ENCODE measurements at regions of chr10 and their contacts with region 1.

Region 1: GRCh38 chr10:110803830-110804338 is 67.8 kb upstream of the PDCD4 start:
- DNase-seq: peak; percentile 31 to 47 (median 45)
- H3K4me3 ChIP-seq: peak overlapping the region in 1 of 7 experiments; percentile 37
- H3K27ac ChIP-seq: no peak overlapping the region
- H3K4me1 ChIP-seq: peaks cover 3 to 32% (median 18%) of the 10 kb centered on the region in 4 experiments
- H3K27me3 ChIP-seq: no peaks in the 10 kb centered on the region

Region 2: GRCh38 chr10:110834629-110835301 is 30.9 kb after region 1 on chr10:
- CTCF ChIA-PET with region 1: interaction called, 16 read pairs
- POLR2A ChIA-PET with region 1: no interaction called
- DNase-seq: peak; percentile 36 to 87 (median 81)
- H3K4me3 ChIP-seq: no peak overlapping the region
- H3K27ac ChIP-seq: peak overlapping the region in 1 of 2 experiments; percentile 22
- H3K4me1 ChIP-seq: peaks cover 0 to 19% (median 12%) of the 10 kb centered on the region in 4 experiments
- H3K27me3 ChIP-seq: no peaks in the 10 kb centered on the region

Region 3: DNA sequence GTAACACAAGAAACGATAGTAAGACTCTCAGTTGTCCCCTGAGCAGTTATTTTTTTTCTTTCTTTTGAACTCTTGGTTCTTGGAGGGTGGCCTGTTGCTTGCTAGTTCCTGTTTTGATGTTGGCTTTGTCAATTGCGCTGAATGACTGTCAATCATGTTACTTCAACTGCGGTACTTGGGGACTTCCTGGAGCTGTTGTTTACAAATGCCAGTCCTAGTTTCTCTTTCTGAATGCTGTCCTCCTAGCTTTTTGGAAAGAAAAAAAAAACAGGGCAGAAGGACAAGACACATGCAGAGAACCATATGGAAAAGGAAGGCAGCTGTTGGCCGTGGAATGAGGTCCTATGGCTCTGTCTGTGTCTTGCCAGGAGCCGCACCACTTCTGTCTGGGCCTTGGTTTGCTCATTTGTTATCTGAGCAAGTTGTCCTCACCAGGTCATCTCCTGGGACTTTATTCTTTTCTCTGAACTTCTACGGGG is 60.8 kb after region 1 on chr10:
- CTCF ChIA-PET with region 1: interaction called, 19 read pairs
- POLR2A ChIA-PET with region 1: no interaction called
- DNase-seq: peak; percentile 76 to 95 (median 91)
- H3K4me3 ChIP-seq: peak overlapping the region in 5 of 7 experiments; percentile 1 to 65 (median 45)
- H3K27ac ChIP-seq: peak overlapping the region; percentile 69 to 79
- H3K4me1 ChIP-seq: peaks cover 68 to 92% (median 81%) of the 10 kb centered on the region in 4 experiments
- H3K27me3 ChIP-seq: no peaks in the 10 kb centered on the region

Region 4: DNA sequence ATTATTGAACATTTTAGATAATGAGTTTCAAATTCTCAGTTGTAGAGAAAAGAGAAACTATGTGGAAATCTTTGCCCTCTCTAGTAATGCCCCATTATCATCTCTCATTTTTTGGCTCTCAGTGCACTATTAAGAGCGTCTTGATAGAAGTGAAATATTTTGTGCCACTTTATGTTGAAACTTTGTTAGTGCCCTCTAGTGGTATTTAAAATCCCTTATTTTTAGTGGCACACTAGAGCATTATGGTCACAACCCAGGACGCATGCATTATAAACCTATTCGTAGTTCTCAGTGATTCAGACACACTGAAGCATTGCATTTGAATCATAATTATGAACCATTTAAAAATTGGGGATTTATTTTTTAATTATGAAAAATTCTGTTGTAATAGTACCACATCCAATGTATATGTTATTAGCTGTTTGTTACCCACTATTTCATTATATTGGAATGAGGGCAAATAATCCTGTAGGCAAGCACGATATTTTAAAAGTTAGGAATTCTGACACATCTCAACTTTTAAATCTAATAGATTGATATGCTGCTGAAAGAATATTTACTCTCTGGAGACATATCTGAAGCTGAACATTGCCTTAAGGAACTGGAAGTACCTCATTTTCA is 89.8 kb after region 1 on chr10:
- CTCF ChIA-PET with region 1: interaction called, 32 read pairs
- POLR2A ChIA-PET with region 1: no interaction called
- DNase-seq: peak; percentile 58 to 83 (median 78)
- H3K4me3 ChIP-seq: no peak overlapping the region
- H3K27ac ChIP-seq: no peak overlapping the region
- H3K4me1 ChIP-seq: no peaks in the 10 kb centered on the region
- H3K27me3 ChIP-seq: no peaks in the 10 kb centered on the region

Region 5: DNA sequence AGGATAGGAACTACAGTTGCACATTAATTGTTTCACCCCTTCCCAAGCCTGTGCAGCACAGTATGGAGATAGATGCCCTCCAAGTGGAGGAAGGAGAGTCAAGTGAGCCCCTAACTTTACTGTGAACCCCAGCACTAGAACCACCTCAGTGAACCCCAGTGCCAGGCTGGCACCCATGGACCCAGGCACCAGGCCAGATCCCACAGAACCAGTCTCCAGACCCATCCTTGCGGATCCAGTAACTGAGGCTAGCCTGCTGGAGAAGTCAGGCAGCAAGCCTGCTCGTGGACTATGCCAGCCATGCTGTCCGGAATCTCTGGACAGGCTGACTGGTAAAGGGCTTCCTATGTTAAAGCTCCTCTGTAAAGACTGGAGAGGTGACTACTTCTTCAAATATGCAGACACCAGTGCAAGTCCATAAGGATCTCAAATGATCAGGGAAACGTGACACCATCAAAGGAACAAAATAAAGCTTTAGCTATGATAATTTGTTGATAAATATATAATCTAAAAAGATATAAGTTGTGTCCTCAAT is 143.2 kb after region 1 on chr10:
- CTCF ChIA-PET with region 1: no interaction called
- POLR2A ChIA-PET with region 1: no interaction called
- DNase-seq: no peak
- H3K4me3 ChIP-seq: no peak overlapping the region
- H3K27ac ChIP-seq: no peak overlapping the region
- H3K4me1 ChIP-seq: no peaks in the 10 kb centered on the region
- H3K27me3 ChIP-seq: no peaks in the 10 kb centered on the region